ENCODE measurements at regions of chr7 and their contacts with region 1.

Region 1: DNA sequence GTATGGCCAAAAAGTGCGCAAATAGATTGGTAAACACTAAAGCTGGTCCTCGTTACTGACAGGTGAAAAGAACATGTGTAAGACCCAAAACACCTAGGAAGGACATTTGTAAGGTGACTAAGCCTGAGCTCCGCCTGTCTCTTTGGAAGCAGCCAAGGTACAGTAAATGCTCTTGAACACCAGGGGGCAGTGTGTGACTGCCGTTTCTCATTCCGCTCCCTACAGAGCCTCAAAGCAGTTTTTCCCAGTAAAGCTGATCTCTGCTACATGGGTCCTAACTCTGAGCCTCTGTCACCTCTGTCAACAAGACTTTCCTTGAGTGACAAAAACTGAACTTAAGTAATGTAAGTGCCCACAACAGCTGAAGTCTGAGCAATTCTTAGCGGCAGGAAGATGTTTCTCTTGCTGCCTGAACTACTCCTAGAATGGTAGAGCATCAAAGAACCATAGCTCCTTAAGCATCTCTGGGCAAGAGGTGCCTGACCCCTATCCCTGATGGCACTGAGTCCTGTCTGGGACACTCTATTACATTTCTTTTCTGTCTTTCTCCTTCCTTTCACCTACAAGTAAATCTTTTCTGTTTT is 238.0 kb upstream of the INHBA start:
- DNase-seq: peak; percentile 67
- ATAC-seq: peak; percentile 83 to 84

Region 2: GRCh38 chr7:41881331-41882130 is 59.3 kb before region 1 on chr7:
- intact Hi-C with region 1: no loop called
- DNase-seq: no peak
- ATAC-seq: peak; percentile 36 to 47

Region 3: GRCh38 chr7:42046483-42046882 is 105.6 kb after region 1 on chr7:
- intact Hi-C with region 1: no loop called
- DNase-seq: no peak
- ATAC-seq: no peak

Region 4: GRCh38 chr7:42115795-42116194 is 174.9 kb after region 1 on chr7:
- intact Hi-C with region 1: no loop called
- DNase-seq: no peak
- ATAC-seq: no peak

Region 5: DNA sequence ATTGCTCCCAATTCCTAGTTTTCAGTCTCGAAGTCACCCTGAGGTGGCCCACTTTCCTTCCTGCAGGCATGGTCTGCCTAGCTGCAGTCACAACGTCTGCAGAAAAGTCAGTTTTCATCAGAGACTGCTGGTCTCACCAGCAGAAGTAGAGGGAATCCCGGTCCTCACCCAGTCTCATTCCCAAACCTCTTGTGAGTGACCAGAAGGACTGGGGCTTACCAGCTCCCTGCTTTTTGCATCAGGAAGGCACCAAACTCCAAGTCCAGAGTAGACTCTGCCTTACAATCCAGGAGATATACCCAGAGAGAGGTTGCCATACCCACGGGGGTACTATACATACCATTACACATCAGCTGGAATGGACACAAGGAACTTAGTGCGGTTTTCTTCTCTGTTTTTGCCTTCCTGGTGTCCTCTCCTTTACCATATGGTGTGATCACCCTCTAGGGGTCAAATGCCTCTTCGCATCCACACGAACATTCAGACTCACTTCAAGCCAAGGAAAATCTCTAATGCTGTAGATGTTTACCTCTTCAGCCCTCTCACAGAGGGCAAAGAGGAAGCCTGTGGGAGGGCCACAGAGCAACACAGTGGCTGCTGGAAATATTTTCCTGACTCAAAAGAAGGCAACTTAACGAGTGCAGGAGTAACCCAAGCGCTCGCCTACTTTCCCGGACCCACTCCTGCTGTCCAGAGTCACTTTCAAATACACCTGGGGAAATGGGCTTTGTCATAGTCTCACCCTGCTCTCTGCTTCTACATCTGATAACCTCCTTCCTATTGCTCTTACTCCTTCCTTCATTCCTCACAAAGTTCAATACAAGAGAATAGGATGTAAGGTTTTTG is 750.2 kb after region 1 on chr7:
- intact Hi-C with region 1: loop called in 1 of 2 experiments (anchors 10 kb)
- DNase-seq: no peak
- ATAC-seq: peak; percentile 44 to 79

Region 6: DNA sequence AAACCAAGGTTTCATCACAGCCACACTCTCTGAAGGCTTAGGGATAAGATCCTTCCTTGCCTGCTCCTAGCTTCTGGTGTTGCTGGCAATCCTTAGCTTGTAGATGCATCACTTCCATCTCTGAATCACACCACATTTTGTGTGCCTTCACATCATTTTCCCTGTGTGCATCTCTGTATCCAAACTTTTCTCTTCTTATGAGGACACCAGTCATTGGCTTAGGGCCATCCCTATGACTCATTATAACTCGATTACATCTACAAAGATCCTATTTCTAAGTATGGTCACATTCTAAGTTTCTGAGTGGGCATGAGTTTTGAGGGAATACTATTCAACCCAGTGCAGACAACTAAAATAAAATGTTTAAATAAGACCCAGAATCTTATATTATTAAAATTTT is 849.3 kb after region 1 on chr7:
- intact Hi-C with region 1: no loop called
- DNase-seq: no peak
- ATAC-seq: no peak

Region 7: GRCh38 chr7:42831718-42832431 is 891.0 kb after region 1 on chr7:
- intact Hi-C with region 1: loop called (anchors 2 to 5 kb)
- DNase-seq: peak; percentile 27
- ATAC-seq: peak; percentile 73 to 77

Region 8: GRCh38 chr7:42876182-42877068 is 935.6 kb after region 1 on chr7:
- intact Hi-C with region 1: loop called in 1 of 2 experiments (anchors 5 kb)
- DNase-seq: no peak
- ATAC-seq: peak; percentile 44 to 63